ENCODE measurements at regions of chr5 and their contacts with region 1.

Region 1: DNA sequence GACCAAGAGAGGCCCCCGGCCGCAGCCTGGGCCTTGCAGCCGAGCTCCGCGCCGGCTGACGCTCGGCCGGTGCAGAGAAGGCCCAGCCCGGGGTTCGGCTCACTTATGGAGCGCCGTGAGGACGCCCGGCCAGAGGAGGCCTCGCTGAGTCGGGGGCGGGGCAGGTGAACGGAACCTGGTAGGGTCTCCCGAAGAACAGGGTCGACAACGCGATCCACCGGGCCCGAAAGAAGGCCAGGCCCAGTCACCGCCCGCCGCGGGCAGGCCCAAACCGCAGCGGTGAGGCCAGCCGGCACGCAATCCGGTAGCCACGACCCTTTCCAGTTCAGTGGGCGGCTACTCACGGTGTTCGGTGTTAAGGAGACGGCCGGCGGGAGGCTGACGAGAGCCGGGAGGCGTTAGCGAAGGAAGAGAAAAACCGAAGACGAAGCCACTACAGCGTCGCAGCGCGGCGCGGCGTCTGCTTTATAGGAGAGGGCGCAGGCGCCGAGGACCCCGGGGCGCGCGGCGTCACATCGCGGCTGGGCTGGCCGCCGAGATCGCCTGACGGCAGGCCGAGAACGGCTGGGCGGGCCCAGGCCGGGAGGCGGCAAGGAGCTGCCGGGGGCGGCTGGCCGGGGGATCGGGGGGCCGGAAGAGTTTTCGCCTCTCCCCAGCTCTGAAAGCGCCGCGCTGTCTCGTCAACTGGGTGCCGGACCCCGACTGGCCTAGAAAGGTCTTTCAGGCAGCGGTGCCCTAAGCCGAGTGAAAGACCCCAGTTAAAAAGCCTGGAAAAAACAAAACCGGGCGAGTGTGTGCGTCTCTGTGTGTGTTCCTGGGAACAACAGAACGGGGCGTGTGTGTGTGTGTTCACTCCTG is at the start of gene SKP1:
- DNase-seq: peak; percentile 81 to 94 (median 91)
- H3K4me3 ChIP-seq: peak within 1 kb of the TSS; percentile 71 to 89
- H3K4me3 Mint-ChIP-seq: peak within 1 kb of the TSS; percentile 98 to 99 (median 98)
- H3K27ac ChIP-seq: peak within 1 kb of the TSS; percentile 97
- H3K27ac Mint-ChIP-seq: peak within 1 kb of the TSS; percentile 97 to 99 (median 98)
- H3K4me1 ChIP-seq: peaks cover 41% of the 10 kb centered on the region
- H3K4me1 Mint-ChIP-seq: peaks cover 21 to 46% (median 30%) of the 10 kb centered on the region in 4 donors
- H3K27me3 ChIP-seq: no peaks in the 10 kb centered on the region
- H3K27me3 Mint-ChIP-seq: no peaks in the 10 kb centered on the region
- total RNA-seq, gene SKP1: 234 to 246 TPM

Region 2: DNA sequence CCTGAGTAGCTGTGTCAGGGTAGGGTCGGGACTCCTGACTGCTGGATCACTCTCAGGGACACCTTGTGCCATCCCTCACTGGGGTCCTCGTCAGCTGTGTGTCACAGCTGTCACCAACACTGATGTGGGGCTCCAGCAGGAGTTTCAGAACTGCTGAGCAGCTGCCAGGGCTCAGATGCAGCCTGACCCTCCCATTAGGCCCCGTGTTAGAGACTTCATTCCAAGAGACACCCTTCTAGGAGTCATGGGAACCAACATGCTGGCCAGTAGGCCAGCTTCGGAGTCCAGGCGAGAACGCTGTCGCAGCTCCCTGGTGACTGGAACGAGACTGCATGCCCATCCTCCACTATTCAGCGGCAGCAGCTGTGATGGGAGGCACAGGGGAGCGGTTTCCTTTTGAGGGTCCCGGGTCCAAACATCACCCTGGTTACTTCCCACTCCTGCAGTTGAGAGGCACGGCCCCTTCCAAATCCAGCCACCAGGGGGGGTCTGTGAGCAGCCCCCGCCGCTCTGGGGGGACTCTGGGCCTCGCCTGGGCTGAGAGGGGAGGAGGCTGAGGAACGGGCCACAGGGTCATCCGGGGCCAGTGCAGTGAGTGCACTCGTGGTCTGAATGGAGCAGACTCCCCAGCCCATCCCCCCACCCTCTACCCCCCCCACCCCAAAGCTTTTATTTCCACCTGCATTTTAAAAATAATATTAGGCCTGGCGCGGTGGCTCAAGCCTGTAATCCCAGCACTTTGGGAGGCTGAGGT is 74.9 kb before region 1 on chr5:
- CTCF ChIA-PET with region 1: interaction called, 6 read pairs
- POLR2A ChIA-PET with region 1: interaction called, 18 read pairs
- intact Hi-C with region 1: no loop called
- DNase-seq: peak; percentile 62 to 77 (median 73)
- H3K4me3 ChIP-seq: no peak overlapping the region
- H3K4me3 Mint-ChIP-seq: peak overlapping the region in 6 of 8 donors; percentile 10 to 62 (median 36)
- H3K27ac ChIP-seq: peak overlapping the region; percentile 85
- H3K27ac Mint-ChIP-seq: peak overlapping the region; percentile 59 to 96 (median 88)
- H3K4me1 ChIP-seq: peaks cover 95% of the 10 kb centered on the region
- H3K4me1 Mint-ChIP-seq: peaks cover 62 to 98% (median 82%) of the 10 kb centered on the region in 4 donors
- H3K27me3 ChIP-seq: no peaks in the 10 kb centered on the region
- H3K27me3 Mint-ChIP-seq: no peaks in the 10 kb centered on the region

Region 3: GRCh38 chr5:134132372-134133034 is 44.2 kb before region 1 on chr5:
- CTCF ChIA-PET with region 1: no interaction called
- POLR2A ChIA-PET with region 1: interaction called, 13 read pairs
- intact Hi-C with region 1: no loop called
- DNase-seq: peak; percentile 86 to 97 (median 88)
- H3K4me3 ChIP-seq: peak overlapping the region; percentile 43 to 68
- H3K4me3 Mint-ChIP-seq: peak overlapping the region; percentile 86 to 99 (median 96)
- H3K27ac ChIP-seq: peak overlapping the region; percentile 97
- H3K27ac Mint-ChIP-seq: peak overlapping the region; percentile 95 to 99 (median 98)
- H3K4me1 ChIP-seq: peaks cover 100% of the 10 kb centered on the region
- H3K4me1 Mint-ChIP-seq: peaks cover 65 to 100% (median 85%) of the 10 kb centered on the region in 4 donors
- H3K27me3 ChIP-seq: no peaks in the 10 kb centered on the region
- H3K27me3 Mint-ChIP-seq: no peaks in the 10 kb centered on the region

Region 4: DNA sequence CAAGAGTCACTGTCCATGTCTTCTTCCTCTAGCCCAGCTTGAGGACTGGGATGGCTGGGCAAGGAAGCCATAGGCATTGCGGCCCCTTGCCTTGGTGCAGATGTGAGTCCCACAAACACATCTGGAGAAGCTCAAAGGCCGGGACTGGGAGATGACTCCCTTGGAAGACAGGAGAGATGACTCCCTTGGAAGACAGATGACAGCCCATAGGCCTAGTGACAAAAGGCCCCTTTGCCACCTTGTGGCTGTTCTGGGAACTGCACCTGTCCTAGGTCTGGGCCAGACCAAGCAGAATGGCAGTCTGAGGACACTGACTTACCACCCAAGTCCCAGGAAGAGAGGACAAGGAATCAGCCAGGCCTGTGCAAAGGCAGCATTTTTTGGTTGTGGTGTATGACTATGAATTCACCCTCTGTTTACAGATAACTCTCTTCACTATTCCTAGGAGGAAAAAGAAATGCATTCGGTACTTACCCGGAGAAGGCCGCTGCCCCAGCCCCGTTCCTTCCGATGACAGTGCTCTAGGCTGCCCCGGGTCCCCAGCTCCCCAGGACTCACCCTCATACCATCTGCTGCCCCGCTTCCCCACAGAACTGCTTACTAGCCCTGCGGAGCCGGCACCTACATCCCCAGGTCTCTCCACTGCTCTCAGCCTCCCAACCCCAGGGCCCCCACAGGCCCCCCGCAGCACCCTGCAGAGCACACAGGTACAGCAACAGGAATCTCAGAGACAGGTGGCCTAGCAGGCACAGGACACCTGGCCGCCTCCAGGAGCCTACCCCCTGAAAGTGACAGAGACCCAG is 30.8 kb before region 1 on chr5:
- CTCF ChIA-PET with region 1: interaction called, 4 read pairs
- POLR2A ChIA-PET with region 1: interaction called, 115 read pairs
- intact Hi-C with region 1: loop called (anchors 2 kb)
- DNase-seq: peak; percentile 74 to 83 (median 77)
- H3K4me3 ChIP-seq: no peak overlapping the region
- H3K4me3 Mint-ChIP-seq: peak overlapping the region in 2 of 8 donors; percentile 26 to 30
- H3K27ac ChIP-seq: no peak overlapping the region
- H3K27ac Mint-ChIP-seq: peak overlapping the region; percentile 11 to 98 (median 89)
- H3K4me1 ChIP-seq: peaks cover 24% of the 10 kb centered on the region
- H3K4me1 Mint-ChIP-seq: peaks cover 26 to 70% (median 44%) of the 10 kb centered on the region in 4 donors
- H3K27me3 ChIP-seq: no peaks in the 10 kb centered on the region
- H3K27me3 Mint-ChIP-seq: no peaks in the 10 kb centered on the region

Region 5: GRCh38 chr5:134161513-134162395 is 15.0 kb before region 1 on chr5:
- CTCF ChIA-PET with region 1: interaction called, 4 read pairs
- POLR2A ChIA-PET with region 1: interaction called, 115 read pairs
- intact Hi-C with region 1: no loop called
- DNase-seq: no peak
- H3K4me3 ChIP-seq: no peak overlapping the region
- H3K4me3 Mint-ChIP-seq: no peak overlapping the region
- H3K27ac ChIP-seq: no peak overlapping the region
- H3K27ac Mint-ChIP-seq: peak overlapping the region in 5 of 7 donors; percentile 9 to 55 (median 22)
- H3K4me1 ChIP-seq: peaks cover 3% of the 10 kb centered on the region
- H3K4me1 Mint-ChIP-seq: peaks cover 21 to 44% (median 32%) of the 10 kb centered on the region in 4 donors
- H3K27me3 ChIP-seq: no peaks in the 10 kb centered on the region
- H3K27me3 Mint-ChIP-seq: no peaks in the 10 kb centered on the region

Region 6: GRCh38 chr5:134370871-134371833 is 194.4 kb after region 1 on chr5 and contains the start of gene UBE2B:
- CTCF ChIA-PET with region 1: no interaction called
- POLR2A ChIA-PET with region 1: interaction called, 19 read pairs
- intact Hi-C with region 1: loop called (anchors 2 kb)
- DNase-seq: peak; percentile 98 to 99 (median 98)
- H3K4me3 ChIP-seq: peak within 1 kb of the TSS; percentile 86 to 92
- H3K4me3 Mint-ChIP-seq: peak within 1 kb of the TSS; percentile 96 to 99 (median 98)
- H3K27ac ChIP-seq: peak within 1 kb of the TSS; percentile 99
- H3K27ac Mint-ChIP-seq: peak within 1 kb of the TSS; percentile 97 to 100 (median 100)
- H3K4me1 ChIP-seq: peaks cover 52% of the 10 kb centered on the region
- H3K4me1 Mint-ChIP-seq: peaks cover 40 to 78% (median 49%) of the 10 kb centered on the region in 4 donors
- H3K27me3 ChIP-seq: no peaks in the 10 kb centered on the region
- H3K27me3 Mint-ChIP-seq: peaks cover 0 to 5% of the 10 kb centered on the region in 2 donors
- total RNA-seq, gene UBE2B: 121 to 124 TPM

Region 7: GRCh38 chr5:134417707-134418106 is 241.0 kb after region 1 on chr5:
- CTCF ChIA-PET with region 1: no interaction called
- POLR2A ChIA-PET with region 1: no interaction called
- intact Hi-C with region 1: no loop called
- DNase-seq: no peak
- H3K4me3 ChIP-seq: no peak overlapping the region
- H3K4me3 Mint-ChIP-seq: no peak overlapping the region
- H3K27ac ChIP-seq: no peak overlapping the region
- H3K27ac Mint-ChIP-seq: no peak overlapping the region
- H3K4me1 ChIP-seq: peaks cover 2% of the 10 kb centered on the region
- H3K4me1 Mint-ChIP-seq: peaks cover 0 to 6% (median 3%) of the 10 kb centered on the region in 4 donors
- H3K27me3 ChIP-seq: no peaks in the 10 kb centered on the region
- H3K27me3 Mint-ChIP-seq: no peaks in the 10 kb centered on the region